ENCODE measurements at regions of chr12 and their contacts with region 1.

Region 1: GRCh38 chr12:44817687-44818086 is 58.4 kb downstream of the NELL2 start:
- DNase-seq: no peak
- ATAC-seq: no peak
- H3K4me3 ChIP-seq: no peak overlapping the region
- H3K4me3 Mint-ChIP-seq: peak overlapping the region; percentile 21
- H3K27ac ChIP-seq: no peak overlapping the region
- H3K27ac Mint-ChIP-seq: peak overlapping the region; percentile 70
- H3K4me1 ChIP-seq: peaks cover 9% of the 10 kb centered on the region
- H3K4me1 Mint-ChIP-seq: peaks cover 81% of the 10 kb centered on the region
- H3K27me3 ChIP-seq: no peaks in the 10 kb centered on the region
- H3K27me3 Mint-ChIP-seq: no peaks in the 10 kb centered on the region
- CTCF ChIP-seq: no peak

Region 2: GRCh38 chr12:44728566-44728965 is 89.1 kb before region 1 on chr12:
- CTCF ChIA-PET with region 1: no interaction called
- POLR2A ChIA-PET with region 1: no interaction called
- intact Hi-C with region 1: no loop called
- DNase-seq: no peak
- ATAC-seq: no peak
- H3K4me3 ChIP-seq: no peak overlapping the region
- H3K4me3 Mint-ChIP-seq: no peak overlapping the region
- H3K27ac ChIP-seq: no peak overlapping the region
- H3K27ac Mint-ChIP-seq: no peak overlapping the region
- H3K4me1 ChIP-seq: no peaks in the 10 kb centered on the region
- H3K4me1 Mint-ChIP-seq: peaks cover 19% of the 10 kb centered on the region
- H3K27me3 ChIP-seq: no peaks in the 10 kb centered on the region
- H3K27me3 Mint-ChIP-seq: no peaks in the 10 kb centered on the region
- CTCF ChIP-seq: no peak

Region 3: GRCh38 chr12:44788731-44789130 is 29.0 kb before region 1 on chr12:
- CTCF ChIA-PET with region 1: no interaction called
- POLR2A ChIA-PET with region 1: no interaction called
- intact Hi-C with region 1: loop called in 1 of 2 experiments (anchors 2 kb)
- DNase-seq: no peak
- ATAC-seq: no peak
- H3K4me3 ChIP-seq: no peak overlapping the region
- H3K4me3 Mint-ChIP-seq: no peak overlapping the region
- H3K27ac ChIP-seq: no peak overlapping the region
- H3K27ac Mint-ChIP-seq: peak overlapping the region; percentile 25
- H3K4me1 ChIP-seq: no peaks in the 10 kb centered on the region
- H3K4me1 Mint-ChIP-seq: peaks cover 46% of the 10 kb centered on the region
- H3K27me3 ChIP-seq: no peaks in the 10 kb centered on the region
- H3K27me3 Mint-ChIP-seq: no peaks in the 10 kb centered on the region
- CTCF ChIP-seq: no peak

Region 4: DNA sequence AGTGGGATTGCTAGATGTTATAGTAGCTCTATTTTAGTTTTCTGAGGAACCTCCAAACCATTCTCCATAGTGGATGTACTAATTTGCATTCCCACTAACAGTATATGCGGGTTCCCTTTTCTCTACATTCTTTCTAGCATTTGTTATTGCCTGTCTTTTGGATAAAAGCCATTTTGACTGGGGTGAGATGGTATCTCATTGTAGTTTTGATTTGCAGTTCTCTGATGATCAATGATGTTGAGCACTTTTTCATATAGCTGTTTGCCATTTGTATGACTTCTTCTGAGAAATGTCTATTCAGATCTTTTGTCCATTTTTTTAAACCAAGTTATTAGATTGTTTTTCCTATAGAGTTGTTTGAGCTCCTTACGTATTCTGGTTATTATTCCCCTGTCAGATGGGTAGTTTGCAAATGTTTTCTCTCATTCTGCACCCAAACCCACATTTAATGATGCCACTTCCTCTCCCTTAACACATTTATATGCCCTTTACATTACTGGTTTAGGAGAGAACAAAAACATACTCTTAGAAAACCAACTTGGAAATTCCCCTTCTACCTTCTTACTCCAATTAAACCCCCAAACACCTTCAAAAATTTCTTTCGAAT is 10.2 kb after region 1 on chr12:
- CTCF ChIA-PET with region 1: interaction called, 9 read pairs
- POLR2A ChIA-PET with region 1: interaction called, 15 read pairs
- intact Hi-C with region 1: no loop called
- DNase-seq: peak in 3 of 14 experiments; percentile 76 to 79 (median 77)
- ATAC-seq: peak; percentile 86
- H3K4me3 ChIP-seq: peak overlapping the region; percentile 17
- H3K4me3 Mint-ChIP-seq: peak overlapping the region; percentile 78
- H3K27ac ChIP-seq: peak overlapping the region; percentile 48 to 59
- H3K27ac Mint-ChIP-seq: peak overlapping the region; percentile 94
- H3K4me1 ChIP-seq: peaks cover 23% of the 10 kb centered on the region
- H3K4me1 Mint-ChIP-seq: peaks cover 67% of the 10 kb centered on the region
- H3K27me3 ChIP-seq: no peaks in the 10 kb centered on the region
- H3K27me3 Mint-ChIP-seq: no peaks in the 10 kb centered on the region
- CTCF ChIP-seq: no peak

Measured in CD4-positive, alpha-beta T cell (primary cell).